ENCODE measurements at regions of chr2 and their contacts with region 1.

Region 1: DNA sequence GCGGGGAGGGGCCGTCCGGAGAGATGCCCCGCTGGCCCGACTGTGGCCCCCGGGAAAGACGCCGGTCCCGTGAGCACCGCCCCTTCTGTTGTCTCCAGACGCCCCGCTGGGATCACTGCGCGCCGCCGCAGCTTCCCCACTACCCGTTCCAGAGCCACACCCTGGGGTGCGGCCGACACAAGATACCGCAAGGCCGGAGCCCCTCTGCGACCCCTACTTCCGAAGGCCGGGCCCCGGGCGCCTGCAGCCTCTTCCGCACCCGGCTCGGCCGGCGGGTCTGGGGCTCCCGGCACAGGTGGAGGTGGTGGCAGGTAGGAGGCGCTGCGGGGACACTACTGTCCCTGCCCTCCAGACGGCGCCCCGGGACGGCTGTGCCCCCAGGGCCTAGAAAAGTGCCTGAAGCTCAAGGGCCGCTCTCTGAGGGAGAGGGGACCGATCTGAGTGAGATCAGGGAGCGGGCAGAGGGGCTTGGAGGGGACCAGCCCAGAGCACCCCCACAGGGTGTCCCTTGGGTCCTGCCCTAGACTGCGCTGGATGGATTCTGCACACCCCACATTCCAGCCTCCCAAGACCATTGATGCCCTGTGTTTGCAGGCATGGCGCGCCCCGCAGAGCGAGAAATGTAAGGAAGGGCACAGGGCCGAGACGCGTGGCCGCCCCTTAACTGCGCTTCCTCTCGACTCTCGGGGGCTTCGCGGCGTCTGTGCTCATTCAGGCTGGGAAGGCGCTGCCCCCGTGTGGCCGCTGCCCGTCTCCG is 80.0 kb downstream of the GFPT1 start:
- DNase-seq: peak; percentile 96
- H3K4me3 ChIP-seq: peak overlapping the region; percentile 65 to 79 (median 72)
- H3K27ac ChIP-seq: peak overlapping the region; percentile 85 to 92 (median 89)
- H3K4me1 ChIP-seq: peaks cover 43 to 65% (median 61%) of the 10 kb centered on the region in 4 donors
- H3K27me3 ChIP-seq: no peaks in the 10 kb centered on the region
- CTCF ChIP-seq: peak in 2 of 3 experiments; percentile 76 to 86
- EP300 ChIP-seq: no peak
- POLR2A ChIP-seq: no peak

Region 2: DNA sequence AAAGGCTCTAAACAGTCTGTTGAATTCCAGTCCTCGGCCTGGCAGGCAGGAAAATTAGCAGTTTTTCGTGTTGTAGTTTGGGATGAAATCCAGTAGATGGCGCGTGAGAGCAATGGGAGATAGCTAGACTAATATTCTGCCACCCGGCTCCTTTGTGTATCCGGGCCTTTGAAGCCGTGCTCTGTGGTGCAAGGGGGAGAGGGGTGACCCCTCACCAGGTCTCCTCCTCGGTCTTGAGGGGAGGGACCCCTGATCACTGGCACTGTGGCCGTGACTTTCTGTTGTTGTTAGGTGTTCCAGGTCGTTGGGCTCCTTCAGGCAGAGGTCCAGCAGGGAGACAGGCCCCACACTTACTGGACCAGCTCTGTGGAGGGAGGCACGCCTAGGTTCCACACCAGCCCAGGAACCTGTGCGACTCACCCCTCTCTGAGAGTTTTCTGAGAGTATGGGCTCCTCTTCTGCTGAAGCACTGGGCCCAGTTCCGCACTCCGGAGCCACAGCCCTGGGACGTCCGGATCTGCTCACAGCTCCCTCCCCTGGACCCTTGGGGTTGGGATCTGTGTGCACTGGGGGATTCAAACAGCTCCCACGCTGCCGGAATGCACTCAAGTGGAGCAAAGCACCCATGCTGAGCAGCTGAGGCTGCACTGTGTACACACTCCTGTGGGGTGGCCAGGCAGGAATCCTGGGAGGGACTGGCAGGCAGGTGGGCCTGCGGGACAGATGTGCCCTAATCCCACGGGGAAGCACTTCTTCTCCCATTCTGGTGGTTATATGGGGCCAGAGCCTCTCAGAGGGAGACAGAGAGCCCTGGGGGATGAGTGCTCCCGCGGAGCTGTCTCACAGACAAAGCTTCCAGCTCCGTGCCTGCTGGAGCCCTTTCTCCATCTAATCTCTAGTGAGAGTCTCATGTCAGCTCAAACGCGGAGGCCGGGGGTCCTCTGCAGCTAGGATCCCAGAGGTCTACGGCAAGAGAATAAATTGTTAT is 363.1 kb before region 1 on chr2:
- intact Hi-C with region 1: loop called (anchors 2 kb)
- DNase-seq: no peak
- H3K4me3 ChIP-seq: no peak overlapping the region
- H3K27ac ChIP-seq: no peak overlapping the region
- H3K4me1 ChIP-seq: peaks cover 6 to 10% (median 10%) of the 10 kb centered on the region in 4 donors
- H3K27me3 ChIP-seq: no peaks in the 10 kb centered on the region
- CTCF ChIP-seq: peak; percentile 74 to 90 (median 81)
- EP300 ChIP-seq: no peak
- POLR2A ChIP-seq: no peak

Region 3: DNA sequence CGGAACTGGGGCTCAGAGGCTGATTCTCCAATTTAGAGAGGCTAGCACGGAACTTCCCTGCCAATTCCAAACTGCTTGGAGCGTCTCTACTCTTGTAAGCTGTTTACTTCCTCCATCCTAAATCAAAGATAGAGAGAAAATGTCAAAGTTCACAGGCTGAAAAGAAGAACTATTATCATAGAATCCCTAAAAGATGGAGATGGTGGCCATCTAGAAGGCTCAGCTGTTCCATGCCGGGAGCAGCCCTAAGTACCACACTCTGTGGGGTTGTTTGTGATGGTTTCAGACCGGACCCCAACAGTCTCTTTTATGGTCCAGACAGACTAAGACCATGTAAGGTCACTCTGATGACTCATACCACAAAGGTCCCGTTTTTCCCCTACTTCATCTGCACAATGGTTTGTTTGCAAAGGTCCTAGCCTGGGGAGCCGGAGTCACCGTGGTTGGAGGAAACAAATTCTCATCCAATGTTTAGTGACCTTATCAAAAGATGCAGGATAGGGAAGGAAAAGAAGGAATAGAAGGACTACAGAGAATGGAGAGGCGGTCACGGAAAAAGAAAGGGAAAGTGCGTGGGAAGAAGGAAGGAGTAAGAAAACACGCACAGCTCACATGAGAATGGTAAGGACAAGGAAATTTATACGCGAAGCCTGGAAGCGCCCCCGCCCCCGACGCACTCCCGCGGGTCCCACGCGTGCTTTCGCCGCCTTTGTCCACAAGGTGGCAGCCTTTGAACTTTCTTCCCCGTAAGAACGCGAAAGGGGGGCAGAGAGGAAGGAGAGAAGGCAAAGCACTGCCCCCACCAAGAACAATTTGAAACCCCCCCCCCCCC is 294.5 kb before region 1 on chr2:
- intact Hi-C with region 1: loop called (anchors 1 kb)
- DNase-seq: no peak
- H3K4me3 ChIP-seq: peak overlapping the region; percentile 80 to 94 (median 90)
- H3K27ac ChIP-seq: peak overlapping the region; percentile 91 to 93 (median 92)
- H3K4me1 ChIP-seq: peaks cover 18 to 50% (median 47%) of the 10 kb centered on the region in 4 donors
- H3K27me3 ChIP-seq: no peaks in the 10 kb centered on the region
- CTCF ChIP-seq: peak; percentile 83 to 90 (median 86)
- EP300 ChIP-seq: no peak
- POLR2A ChIP-seq: no peak

Region 4: GRCh38 chr2:69026026-69026425 is 281.0 kb before region 1 on chr2:
- intact Hi-C with region 1: loop called (anchors 2 kb)
- DNase-seq: peak; percentile 87
- H3K4me3 ChIP-seq: no peak overlapping the region
- H3K27ac ChIP-seq: peak overlapping the region in 2 of 4 donors; percentile 19 to 28
- H3K4me1 ChIP-seq: peaks cover 3 to 57% (median 43%) of the 10 kb centered on the region in 4 donors
- H3K27me3 ChIP-seq: no peaks in the 10 kb centered on the region
- CTCF ChIP-seq: peak; percentile 48 to 60 (median 57)
- EP300 ChIP-seq: no peak
- POLR2A ChIP-seq: no peak

Region 5: GRCh38 chr2:70403267-70404053 is 1096.5 kb after region 1 on chr2:
- intact Hi-C with region 1: no loop called
- DNase-seq: no peak
- H3K4me3 ChIP-seq: no peak overlapping the region
- H3K27ac ChIP-seq: no peak overlapping the region
- H3K4me1 ChIP-seq: no peaks in the 10 kb centered on the region
- H3K27me3 ChIP-seq: peaks cover 0 to 29% (median 0%) of the 10 kb centered on the region in 4 donors
- CTCF ChIP-seq: no peak
- EP300 ChIP-seq: no peak
- POLR2A ChIP-seq: no peak

Measured in esophagus muscularis mucosa (tissue), 4 donors.